CD4-positive, alpha-beta T cell (primary cell): ENCODE measurements at regions of chr19 and their contacts with region 1.

Region 1: GRCh38 chr19:57947208-57948134 is at the start of gene ZNF256:
- DNase-seq: peak; percentile 65 to 93 (median 82)
- ATAC-seq: peak; percentile 88
- H3K4me3 ChIP-seq: peak within 1 kb of the TSS; percentile 85
- H3K4me3 Mint-ChIP-seq: peak within 1 kb of the TSS; percentile 94
- H3K27ac ChIP-seq: peak within 1 kb of the TSS; percentile 61 to 82
- H3K27ac Mint-ChIP-seq: peak within 1 kb of the TSS; percentile 88
- H3K4me1 ChIP-seq: peaks cover 17% of the 10 kb centered on the region
- H3K4me1 Mint-ChIP-seq: peaks cover 21% of the 10 kb centered on the region
- H3K27me3 ChIP-seq: no peaks in the 10 kb centered on the region
- H3K27me3 Mint-ChIP-seq: no peaks in the 10 kb centered on the region
- CTCF ChIP-seq: peak; percentile 31
- total RNA-seq, gene ZNF256: 15.2 TPM

Region 2: GRCh38 chr19:57682226-57682766 is 265.2 kb before region 1 on chr19:
- CTCF ChIA-PET with region 1: no interaction called
- POLR2A ChIA-PET with region 1: no interaction called
- intact Hi-C with region 1: loop called in 1 of 2 experiments (anchors 5 kb)
- DNase-seq: no peak
- ATAC-seq: no peak
- H3K4me3 ChIP-seq: peak overlapping the region; percentile 81
- H3K4me3 Mint-ChIP-seq: peak overlapping the region; percentile 98
- H3K27ac ChIP-seq: peak overlapping the region; percentile 29 to 55
- H3K27ac Mint-ChIP-seq: peak overlapping the region; percentile 93
- H3K4me1 ChIP-seq: peaks cover 26% of the 10 kb centered on the region
- H3K4me1 Mint-ChIP-seq: peaks cover 43% of the 10 kb centered on the region
- H3K27me3 ChIP-seq: peaks cover 4 to 8% of the 10 kb centered on the region in 2 experiments
- H3K27me3 Mint-ChIP-seq: peaks cover 14% of the 10 kb centered on the region
- CTCF ChIP-seq: no peak

Region 3: GRCh38 chr19:57907394-57907793 is 40.1 kb before region 1 on chr19:
- CTCF ChIA-PET with region 1: no interaction called
- POLR2A ChIA-PET with region 1: no interaction called
- intact Hi-C with region 1: no loop called
- DNase-seq: no peak
- ATAC-seq: no peak
- H3K4me3 ChIP-seq: no peak overlapping the region
- H3K4me3 Mint-ChIP-seq: no peak overlapping the region
- H3K27ac ChIP-seq: no peak overlapping the region
- H3K27ac Mint-ChIP-seq: no peak overlapping the region
- H3K4me1 ChIP-seq: no peaks in the 10 kb centered on the region
- H3K4me1 Mint-ChIP-seq: peaks cover 10% of the 10 kb centered on the region
- H3K27me3 ChIP-seq: no peaks in the 10 kb centered on the region
- H3K27me3 Mint-ChIP-seq: no peaks in the 10 kb centered on the region
- CTCF ChIP-seq: no peak

Region 4: GRCh38 chr19:58021541-58022282 is 74.2 kb after region 1 on chr19:
- CTCF ChIA-PET with region 1: no interaction called
- POLR2A ChIA-PET with region 1: no interaction called
- intact Hi-C with region 1: no loop called
- DNase-seq: peak in 8 of 14 experiments; percentile 7 to 69 (median 38)
- ATAC-seq: peak; percentile 95
- H3K4me3 ChIP-seq: no peak overlapping the region
- H3K4me3 Mint-ChIP-seq: no peak overlapping the region
- H3K27ac ChIP-seq: no peak overlapping the region
- H3K27ac Mint-ChIP-seq: no peak overlapping the region
- H3K4me1 ChIP-seq: no peaks in the 10 kb centered on the region
- H3K4me1 Mint-ChIP-seq: no peaks in the 10 kb centered on the region
- H3K27me3 ChIP-seq: peaks cover 0 to 2% of the 10 kb centered on the region in 2 experiments
- H3K27me3 Mint-ChIP-seq: peaks cover 5% of the 10 kb centered on the region
- CTCF ChIP-seq: no peak

Region 5: GRCh38 chr19:58134244-58134643 is 186.8 kb after region 1 on chr19:
- CTCF ChIA-PET with region 1: no interaction called
- POLR2A ChIA-PET with region 1: no interaction called
- intact Hi-C with region 1: loop called in 1 of 2 experiments (anchors 5 kb)
- DNase-seq: no peak
- ATAC-seq: no peak
- H3K4me3 ChIP-seq: no peak overlapping the region
- H3K4me3 Mint-ChIP-seq: no peak overlapping the region
- H3K27ac ChIP-seq: no peak overlapping the region
- H3K27ac Mint-ChIP-seq: no peak overlapping the region
- H3K4me1 ChIP-seq: no peaks in the 10 kb centered on the region
- H3K4me1 Mint-ChIP-seq: no peaks in the 10 kb centered on the region
- H3K27me3 ChIP-seq: no peaks in the 10 kb centered on the region
- H3K27me3 Mint-ChIP-seq: no peaks in the 10 kb centered on the region
- CTCF ChIP-seq: no peak